ENCODE measurements at regions of chr2 and their contacts with region 1.

Region 1: GRCh38 chr2:138622613-138623012 is 121.0 kb downstream of the SPOPL start:
- DNase-seq: no peak

Region 2: GRCh38 chr2:137813176-137813575 is 809.4 kb before region 1 on chr2:
- intact Hi-C with region 1: no loop called
- DNase-seq: no peak

Region 3: GRCh38 chr2:138581909-138582308 is 40.7 kb before region 1 on chr2:
- intact Hi-C with region 1: no loop called
- DNase-seq: no peak

Region 4: GRCh38 chr2:139000131-139000785 is 377.6 kb after region 1 on chr2:
- intact Hi-C with region 1: loop called in 1 of 2 experiments (anchors 5 kb)
- DNase-seq: no peak

Measured in posterior vena cava (tissue), 2 donors.